ENCODE measurements at regions of chr13 and their contacts with region 1.

Region 1: DNA sequence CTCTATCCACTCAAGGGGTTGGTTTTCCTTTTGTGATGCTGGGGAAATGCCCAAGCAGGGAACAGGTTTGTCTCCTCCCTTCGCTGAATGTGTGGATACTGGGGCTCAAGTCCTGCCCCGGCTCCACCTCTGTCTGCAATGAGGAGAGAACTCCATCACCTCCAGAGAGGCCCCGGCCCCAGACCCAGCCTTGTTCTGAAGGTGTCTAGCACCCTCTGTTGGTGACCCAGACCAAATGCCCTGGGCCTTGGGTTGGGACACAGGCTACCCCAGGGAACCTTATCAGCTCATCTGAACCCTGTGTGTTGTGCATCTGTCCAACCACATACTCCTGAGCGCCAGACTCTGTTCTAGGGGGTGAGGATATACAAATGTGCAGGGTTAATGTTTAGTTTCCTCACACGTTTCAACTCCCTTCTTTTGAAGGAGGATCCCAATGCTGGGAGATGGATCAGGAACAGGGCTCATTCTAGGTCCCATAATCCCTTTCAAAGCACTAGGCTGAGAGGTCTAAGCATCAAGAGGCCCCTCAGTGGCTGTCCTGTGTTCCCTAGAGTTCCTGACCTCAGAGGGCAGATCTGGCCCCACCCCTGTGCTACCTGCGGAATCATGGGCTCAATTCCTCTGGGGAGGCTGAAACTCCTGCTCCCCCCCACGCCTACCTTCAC is 112.5 kb upstream of the SLC7A1 start:
- DNase-seq: no peak
- H3K4me3 ChIP-seq: no peak overlapping the region
- H3K27ac ChIP-seq: no peak overlapping the region
- H3K4me1 ChIP-seq: peaks cover 16% of the 10 kb centered on the region
- H3K27me3 ChIP-seq: peaks cover 10% of the 10 kb centered on the region
- CTCF ChIP-seq: peak; percentile 64

Region 2: GRCh38 chr13:29513397-29514322 is 194.3 kb before region 1 on chr13:
- intact Hi-C with region 1: loop called (anchors 10 kb)
- DNase-seq: no peak
- H3K4me3 ChIP-seq: no peak overlapping the region
- H3K27ac ChIP-seq: peak overlapping the region; percentile 27
- H3K4me1 ChIP-seq: peaks cover 17% of the 10 kb centered on the region
- H3K27me3 ChIP-seq: no peaks in the 10 kb centered on the region
- CTCF ChIP-seq: no peak

Region 3: GRCh38 chr13:29819143-29819542 is 111.1 kb after region 1 on chr13:
- intact Hi-C with region 1: no loop called
- DNase-seq: no peak
- H3K4me3 ChIP-seq: no peak overlapping the region
- H3K27ac ChIP-seq: no peak overlapping the region
- H3K4me1 ChIP-seq: peaks cover 51% of the 10 kb centered on the region
- H3K27me3 ChIP-seq: no peaks in the 10 kb centered on the region
- CTCF ChIP-seq: no peak

Region 4: DNA sequence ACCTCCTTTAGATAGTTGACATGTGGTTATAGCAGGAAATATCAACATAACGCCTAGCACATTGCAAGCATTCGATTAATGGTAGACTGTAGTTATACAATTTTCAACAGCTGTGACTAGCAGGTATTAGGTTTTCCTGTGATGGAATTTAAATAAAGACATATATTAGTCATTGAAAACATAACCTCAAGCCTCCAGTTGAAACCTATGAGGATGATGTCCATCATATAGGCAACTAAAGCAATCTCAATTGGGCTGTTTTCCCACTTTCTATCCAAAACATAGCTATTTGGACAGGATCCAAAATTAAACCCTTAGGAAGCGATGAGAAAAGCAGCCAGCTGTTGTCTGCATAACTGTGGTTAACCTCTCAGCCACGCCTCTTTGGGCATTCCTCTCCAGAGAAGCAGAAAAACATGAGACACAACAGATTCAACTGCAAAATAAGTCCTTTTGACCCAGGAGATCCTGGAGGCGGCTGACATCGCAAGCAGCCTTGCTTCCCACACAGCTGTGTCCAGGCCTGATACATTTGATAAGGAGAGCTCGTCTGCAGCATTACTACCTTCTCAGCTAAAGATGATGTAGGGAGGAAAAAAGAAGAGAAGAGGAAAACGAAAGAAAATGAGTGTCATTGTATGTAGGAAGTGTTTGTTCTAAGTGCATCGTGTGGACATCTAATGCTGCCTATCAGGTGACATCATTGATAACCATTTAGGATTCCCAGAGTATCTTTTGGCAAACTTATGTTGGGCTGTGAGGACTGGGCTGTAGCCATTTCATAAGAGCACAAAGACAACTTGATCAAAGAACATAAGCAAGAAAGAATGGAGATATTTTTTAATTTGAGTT is 194.3 kb after region 1 on chr13:
- intact Hi-C with region 1: no loop called
- DNase-seq: peak; percentile 16
- H3K4me3 ChIP-seq: no peak overlapping the region
- H3K27ac ChIP-seq: no peak overlapping the region
- H3K4me1 ChIP-seq: peaks cover 7% of the 10 kb centered on the region
- H3K27me3 ChIP-seq: peaks cover 6% of the 10 kb centered on the region
- CTCF ChIP-seq: no peak

Measured in left ventricle myocardium inferior (tissue), 1 donor.